Activated CD8-positive, alpha-beta T cell treated with anti-CD3 and anti-CD28 coated beads for 36 hours (primary cell): ENCODE measurements at regions of chr14 and their contacts with region 1.

Region 1: GRCh38 chr14:51304941-51305340 is 64.9 kb downstream of the TMX1 start:
- DNase-seq: peak; percentile 16
- ATAC-seq: peak; percentile 76
- H3K4me3 Mint-ChIP-seq: no peak overlapping the region
- H3K27ac Mint-ChIP-seq: no peak overlapping the region
- H3K4me1 Mint-ChIP-seq: peaks cover 11% of the 10 kb centered on the region
- H3K27me3 Mint-ChIP-seq: peaks cover 2% of the 10 kb centered on the region
- CTCF ChIP-seq: no peak

Region 2: DNA sequence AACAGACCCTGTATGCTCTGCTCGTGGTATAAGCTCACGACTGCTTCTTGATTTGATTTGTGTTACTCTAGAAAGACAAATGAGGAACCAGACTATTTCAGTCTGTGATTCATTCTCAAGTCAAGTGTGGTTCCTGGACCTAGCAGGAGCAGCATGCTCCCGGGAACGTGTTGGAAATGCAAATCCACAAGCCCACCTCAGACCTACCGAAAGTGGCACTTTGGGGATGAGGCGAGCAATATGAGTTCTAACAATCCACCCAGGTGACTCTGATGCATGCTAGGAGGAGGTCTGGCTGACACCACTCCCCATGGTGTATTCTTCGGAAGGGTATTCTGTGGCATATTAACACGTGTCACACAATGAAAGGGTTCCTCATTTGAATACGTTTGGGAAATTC is 124.4 kb before region 1 on chr14:
- CTCF ChIA-PET with region 1: no interaction called
- POLR2A ChIA-PET with region 1: no interaction called
- intact Hi-C with region 1: no loop called
- DNase-seq: no peak
- ATAC-seq: no peak
- H3K4me3 Mint-ChIP-seq: no peak overlapping the region
- H3K27ac Mint-ChIP-seq: no peak overlapping the region
- H3K4me1 Mint-ChIP-seq: peaks cover 6% of the 10 kb centered on the region
- H3K27me3 Mint-ChIP-seq: no peaks in the 10 kb centered on the region
- CTCF ChIP-seq: no peak

Region 3: DNA sequence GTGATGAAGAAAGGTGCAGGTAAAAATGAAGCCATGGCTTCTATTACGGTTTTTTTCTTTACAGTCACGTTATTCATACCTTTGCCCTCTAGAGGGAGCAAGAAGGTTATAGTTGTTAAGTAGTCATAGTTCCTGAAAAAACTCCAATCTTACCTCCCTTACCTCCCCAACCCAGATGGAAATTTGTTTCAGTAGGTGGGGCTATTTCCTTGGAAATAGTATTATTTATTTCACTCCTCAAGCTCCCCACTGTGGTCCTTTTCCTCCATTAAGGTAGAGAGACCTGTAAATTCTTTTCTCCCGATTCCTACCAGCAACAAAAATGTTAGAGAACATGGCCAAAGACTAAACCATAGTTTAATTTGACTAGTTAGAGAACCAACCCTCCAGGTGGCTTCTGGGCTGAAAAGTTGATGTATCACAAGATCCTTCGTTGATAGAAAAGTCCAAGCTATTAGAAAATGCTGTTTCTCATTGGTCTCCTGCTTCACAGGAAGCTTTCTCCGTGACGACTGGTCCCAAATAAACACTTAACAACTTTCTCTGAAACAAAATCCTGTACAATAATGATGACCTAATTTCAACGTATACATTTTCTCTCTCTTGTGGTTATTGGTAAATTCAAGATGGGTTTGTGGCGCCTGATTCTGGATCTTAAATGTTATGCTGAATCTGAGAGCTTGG is 21.4 kb before region 1 on chr14:
- CTCF ChIA-PET with region 1: interaction called, 35 read pairs
- POLR2A ChIA-PET with region 1: no interaction called
- intact Hi-C with region 1: no loop called
- DNase-seq: no peak
- ATAC-seq: no peak
- H3K4me3 Mint-ChIP-seq: no peak overlapping the region
- H3K27ac Mint-ChIP-seq: no peak overlapping the region
- H3K4me1 Mint-ChIP-seq: no peaks in the 10 kb centered on the region
- H3K27me3 Mint-ChIP-seq: no peaks in the 10 kb centered on the region
- CTCF ChIP-seq: peak; percentile 78

Region 4: DNA sequence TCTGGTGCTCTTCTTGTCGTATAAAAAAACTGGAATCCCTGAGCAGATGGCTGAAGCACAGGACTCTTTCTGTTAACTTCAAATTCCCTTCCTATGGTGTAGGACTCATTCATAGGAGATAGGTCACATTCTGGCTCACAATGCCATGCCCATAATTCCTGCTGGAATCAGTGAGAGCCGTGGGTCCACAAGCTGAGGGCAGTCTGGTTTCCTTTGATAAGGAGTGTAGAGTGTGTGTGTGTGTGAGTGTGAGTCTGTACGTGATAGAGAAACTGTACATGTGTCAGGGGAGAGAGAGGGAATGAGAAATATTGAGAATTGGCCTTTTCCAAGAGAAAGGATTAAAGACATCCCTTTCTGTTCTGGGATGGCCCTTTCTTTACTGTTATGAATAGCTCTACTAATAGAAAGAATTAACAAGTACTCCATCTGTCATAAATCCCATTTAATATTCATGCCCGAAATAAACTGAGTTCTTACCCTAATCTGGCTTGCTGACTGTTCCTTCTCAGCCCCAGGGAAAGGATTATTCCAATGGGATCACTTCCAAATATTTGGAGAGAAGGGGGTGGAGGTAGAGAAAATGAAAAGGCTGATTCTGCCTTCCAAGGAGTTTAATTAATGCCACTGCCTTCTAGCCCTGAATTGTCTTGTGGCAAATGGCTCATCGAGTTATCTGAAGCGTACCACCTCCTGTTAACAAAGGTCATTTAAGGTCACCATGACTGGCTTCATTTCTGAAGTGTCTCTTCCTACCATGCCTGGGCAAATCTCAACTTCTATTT is 14.1 kb after region 1 on chr14:
- CTCF ChIA-PET with region 1: interaction called, 3 read pairs
- POLR2A ChIA-PET with region 1: interaction called, 3 read pairs
- intact Hi-C with region 1: loop called (anchors 2 kb)
- DNase-seq: no peak
- ATAC-seq: no peak
- H3K4me3 Mint-ChIP-seq: no peak overlapping the region
- H3K27ac Mint-ChIP-seq: no peak overlapping the region
- H3K4me1 Mint-ChIP-seq: peaks cover 6% of the 10 kb centered on the region
- H3K27me3 Mint-ChIP-seq: no peaks in the 10 kb centered on the region
- CTCF ChIP-seq: no peak

Region 5: GRCh38 chr14:51357250-51357649 is 52.3 kb after region 1 on chr14:
- CTCF ChIA-PET with region 1: no interaction called
- POLR2A ChIA-PET with region 1: no interaction called
- intact Hi-C with region 1: no loop called
- DNase-seq: no peak
- ATAC-seq: no peak
- H3K4me3 Mint-ChIP-seq: no peak overlapping the region
- H3K27ac Mint-ChIP-seq: no peak overlapping the region
- H3K4me1 Mint-ChIP-seq: no peaks in the 10 kb centered on the region
- H3K27me3 Mint-ChIP-seq: peaks cover 3% of the 10 kb centered on the region
- CTCF ChIP-seq: no peak